Gastrocnemius medialis (tissue), 4 donors: ENCODE measurements at regions of chr9 and their contacts with region 1.

Region 1: DNA sequence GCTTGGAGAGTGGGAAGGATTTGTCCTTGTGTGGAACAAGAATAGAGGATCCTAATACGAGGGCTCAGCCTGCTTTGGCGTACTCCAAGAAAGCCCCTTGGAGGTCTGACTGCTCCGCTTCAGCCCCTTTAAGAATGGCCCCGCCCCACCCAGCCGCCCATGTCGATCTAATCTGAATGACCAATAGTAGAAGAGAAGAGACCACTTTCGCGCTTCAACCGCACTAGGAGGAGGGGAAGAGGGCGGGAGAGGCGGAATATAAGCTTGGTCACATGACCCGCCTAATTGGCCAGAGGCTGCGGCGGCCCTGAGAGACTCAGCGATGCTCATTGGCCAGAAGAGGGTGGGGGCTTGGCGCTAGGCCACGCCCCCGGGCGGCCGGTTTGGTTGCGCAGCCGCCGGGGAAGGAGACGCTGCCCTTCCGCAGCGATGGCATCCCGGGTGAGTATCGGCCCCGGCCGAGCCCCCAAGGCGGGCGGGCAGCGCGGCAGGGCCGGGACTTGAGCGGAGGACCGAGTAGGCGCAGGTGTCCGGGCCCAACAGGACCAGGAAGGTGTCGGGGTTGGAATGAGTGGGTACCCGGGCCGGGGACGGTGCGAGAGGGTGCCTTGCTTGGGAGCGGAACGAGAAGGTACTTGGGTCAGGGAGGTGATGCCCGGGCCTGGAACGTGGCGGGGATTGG is at the start of gene MIGA2:
- DNase-seq: peak; percentile 98 to 99
- ATAC-seq: peak; percentile 99
- H3K4me3 ChIP-seq: peak within 1 kb of the TSS; percentile 85 to 99 (median 92)
- H3K27ac ChIP-seq: peak within 1 kb of the TSS; percentile 79 to 94 (median 87)
- H3K4me1 ChIP-seq: peaks cover 18 to 21% of the 10 kb centered on the region in 2 donors
- H3K27me3 ChIP-seq: no peaks in the 10 kb centered on the region
- CTCF ChIP-seq: peak in 2 of 5 experiments; percentile 14 to 24
- POLR2A ChIP-seq: peak; percentile 89 to 91
- total RNA-seq, gene MIGA2: 5.8 to 20.6 (median 18.1) TPM

Region 2: DNA sequence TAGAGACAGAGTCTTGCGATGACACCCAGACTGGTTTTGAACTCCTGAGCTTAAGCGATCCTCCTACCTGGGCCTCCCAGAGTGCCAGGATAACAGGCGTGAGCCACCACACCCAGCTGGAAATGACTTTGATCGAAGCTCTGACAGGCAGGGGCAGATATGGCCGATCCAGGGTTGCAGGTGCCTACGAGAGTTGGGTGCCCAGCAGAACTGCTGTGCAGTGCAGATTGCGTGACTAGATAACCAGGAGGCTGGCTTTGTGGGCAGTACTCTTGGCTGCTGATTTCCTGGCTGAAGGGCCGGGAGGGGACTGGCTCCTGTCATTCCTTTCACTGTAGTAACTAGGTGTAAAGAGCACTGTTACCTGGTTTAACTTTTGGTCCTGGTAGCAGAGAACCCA is 237.5 kb before region 1 on chr9:
- in situ Hi-C with region 1: no loop called
- intact Hi-C with region 1: no loop called
- DNase-seq: no peak
- ATAC-seq: no peak
- H3K4me3 ChIP-seq: no peak overlapping the region
- H3K27ac ChIP-seq: no peak overlapping the region
- H3K4me1 ChIP-seq: no peaks in the 10 kb centered on the region
- H3K27me3 ChIP-seq: no peaks in the 10 kb centered on the region
- CTCF ChIP-seq: no peak
- POLR2A ChIP-seq: no peak

Region 3: GRCh38 chr9:128947422-128948301 is 88.7 kb before region 1 on chr9 and contains the starts of genes DOLK and NUP188:
- in situ Hi-C with region 1: no loop called
- intact Hi-C with region 1: loop called (anchors 5 kb)
- DNase-seq: peak; percentile 90 to 92
- ATAC-seq: peak; percentile 83 to 88
- H3K4me3 ChIP-seq: peak within 1 kb of the TSS; percentile 67 to 98 (median 94)
- H3K27ac ChIP-seq: peak within 1 kb of the TSS; percentile 88 to 100 (median 97)
- H3K4me1 ChIP-seq: peaks cover 18 to 20% of the 10 kb centered on the region in 2 donors
- H3K27me3 ChIP-seq: no peaks in the 10 kb centered on the region
- CTCF ChIP-seq: peak in 2 of 5 experiments; percentile 42
- POLR2A ChIP-seq: peak; percentile 89 to 95
- total RNA-seq, gene DOLK: 6.5 to 11.8 (median 6.6) TPM
- total RNA-seq, gene NUP188: 24.7 to 59.7 (median 30.3) TPM

Region 4: DNA sequence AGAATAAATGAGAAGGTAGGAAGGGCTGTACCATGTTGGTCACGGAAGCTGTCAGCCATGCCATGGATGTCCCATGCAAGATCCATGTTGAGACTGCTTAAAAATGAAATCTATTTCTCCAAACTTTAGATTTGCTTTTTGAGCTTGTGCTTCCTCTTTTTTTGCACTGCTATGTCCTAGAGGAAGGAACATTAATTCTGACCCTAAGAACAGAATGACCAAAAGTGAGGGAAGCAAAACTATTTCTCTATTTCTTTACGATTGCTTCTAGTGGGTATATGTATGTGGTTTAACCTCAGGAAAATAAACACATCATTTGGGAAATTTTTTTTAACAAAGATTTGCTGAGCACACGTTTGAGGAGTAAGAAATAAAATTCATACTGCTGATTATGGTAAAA is 883.5 kb after region 1 on chr9:
- in situ Hi-C with region 1: no loop called
- intact Hi-C with region 1: no loop called
- DNase-seq: no peak
- ATAC-seq: no peak
- H3K4me3 ChIP-seq: no peak overlapping the region
- H3K27ac ChIP-seq: no peak overlapping the region
- H3K4me1 ChIP-seq: no peaks in the 10 kb centered on the region
- H3K27me3 ChIP-seq: no peaks in the 10 kb centered on the region
- CTCF ChIP-seq: no peak
- POLR2A ChIP-seq: no peak